ENCODE measurements at regions of chr12 and their contacts with region 1.

Region 1: DNA sequence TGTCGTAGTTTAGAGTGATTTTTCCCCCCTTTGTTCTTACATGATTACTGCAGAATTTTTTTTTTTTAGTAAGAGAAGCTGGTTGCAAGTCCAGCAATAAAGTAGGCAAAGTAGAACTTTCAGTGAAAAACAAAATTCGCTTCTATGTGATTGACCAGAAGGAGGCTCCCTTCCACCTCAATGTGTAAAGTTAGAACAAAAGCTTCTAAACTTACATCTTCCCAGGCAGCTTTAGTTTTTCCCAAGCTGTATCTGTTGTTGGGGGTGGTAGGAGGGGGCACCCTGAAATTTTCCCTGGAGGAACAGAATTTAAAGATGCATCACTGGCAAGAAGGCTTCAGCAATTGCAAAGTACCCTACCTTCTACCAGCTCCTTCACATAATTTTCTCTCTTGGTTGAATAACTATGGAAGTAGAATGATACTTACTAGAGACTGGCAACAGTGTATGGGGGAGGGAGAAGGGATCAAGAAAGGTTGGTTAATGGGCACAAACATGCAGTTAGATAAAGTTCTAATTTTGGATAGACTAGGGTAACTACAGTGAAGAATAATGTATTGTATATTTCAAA is 87.3 kb upstream of the E2F7 start:
- DNase-seq: no peak
- H3K4me3 ChIP-seq: no peak overlapping the region
- H3K27ac ChIP-seq: no peak overlapping the region
- H3K4me1 ChIP-seq: no peaks in the 10 kb centered on the region
- H3K27me3 ChIP-seq: no peaks in the 10 kb centered on the region
- CTCF ChIP-seq: peak in 2 of 3 experiments; percentile 24 to 32

Region 2: DNA sequence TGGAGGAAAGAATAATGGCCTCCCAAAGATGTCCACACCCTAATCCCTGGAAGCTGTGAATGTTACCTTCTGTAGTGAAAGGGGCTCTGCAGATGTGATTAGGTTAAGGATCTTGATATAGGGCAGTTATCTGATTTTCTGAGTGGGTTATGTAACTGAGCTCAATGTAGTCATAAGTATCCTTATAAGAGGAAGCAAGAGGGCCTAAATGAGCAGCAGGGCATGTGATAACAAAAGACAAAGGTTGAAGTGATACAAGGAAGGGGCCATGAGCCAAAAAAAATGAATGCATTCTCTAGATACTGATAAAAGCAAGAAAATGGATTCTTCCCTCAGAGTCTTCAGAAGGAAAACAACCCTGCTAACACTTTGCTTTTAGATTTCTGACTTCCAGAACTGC is 671.9 kb before region 1 on chr12:
- intact Hi-C with region 1: no loop called
- DNase-seq: no peak
- H3K4me3 ChIP-seq: no peak overlapping the region
- H3K27ac ChIP-seq: no peak overlapping the region
- H3K4me1 ChIP-seq: no peaks in the 10 kb centered on the region
- H3K27me3 ChIP-seq: no peaks in the 10 kb centered on the region
- CTCF ChIP-seq: no peak

Region 3: DNA sequence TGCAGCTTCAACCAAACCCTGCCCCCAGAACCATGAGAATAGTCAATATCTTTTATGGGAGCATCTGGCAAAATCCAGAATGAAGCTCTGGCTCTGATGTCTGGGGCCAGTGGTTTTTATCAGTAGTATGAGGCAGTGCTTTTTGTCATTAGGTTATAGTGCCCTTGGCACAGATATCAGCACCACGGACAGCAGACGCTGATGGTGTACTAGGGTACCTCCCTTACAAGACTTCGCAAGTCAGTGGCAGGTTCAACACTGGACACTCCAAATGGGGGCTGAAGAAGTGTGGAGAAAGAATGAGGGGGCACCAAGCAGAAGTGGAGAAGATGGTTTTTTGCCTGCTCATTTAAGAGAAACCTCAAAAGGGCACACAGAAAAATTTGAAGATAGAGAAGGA is 19.1 kb before region 1 on chr12:
- intact Hi-C with region 1: no loop called
- DNase-seq: no peak
- H3K4me3 ChIP-seq: no peak overlapping the region
- H3K27ac ChIP-seq: no peak overlapping the region
- H3K4me1 ChIP-seq: no peaks in the 10 kb centered on the region
- H3K27me3 ChIP-seq: no peaks in the 10 kb centered on the region
- CTCF ChIP-seq: no peak

Region 4: GRCh38 chr12:77247542-77247941 is 94.8 kb after region 1 on chr12:
- intact Hi-C with region 1: no loop called
- DNase-seq: no peak
- H3K4me3 ChIP-seq: no peak overlapping the region
- H3K27ac ChIP-seq: no peak overlapping the region
- H3K4me1 ChIP-seq: no peaks in the 10 kb centered on the region
- H3K27me3 ChIP-seq: no peaks in the 10 kb centered on the region
- CTCF ChIP-seq: no peak

Region 5: DNA sequence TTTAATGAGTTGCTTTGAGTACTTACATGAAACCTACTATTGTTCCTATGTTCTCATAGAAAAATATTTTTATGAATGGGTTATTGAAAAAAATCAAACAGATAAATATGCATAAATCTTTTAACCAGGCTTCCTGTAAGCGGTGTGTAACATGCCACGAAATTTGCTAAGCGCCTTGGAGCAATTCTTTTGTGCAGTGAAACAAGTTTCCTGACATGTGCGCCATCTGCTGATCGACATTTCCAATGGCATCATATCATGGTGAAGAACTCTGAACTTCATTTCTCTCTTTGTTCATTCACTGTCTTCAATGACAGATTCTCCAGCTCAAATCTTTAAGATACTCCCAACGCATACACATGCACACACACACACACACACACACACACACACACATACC is 532.4 kb after region 1 on chr12:
- intact Hi-C with region 1: loop called (anchors 10 kb)
- DNase-seq: peak in 1 of 2 donors; percentile 64
- H3K4me3 ChIP-seq: peak overlapping the region in 1 of 2 donors; percentile 2
- H3K27ac ChIP-seq: no peak overlapping the region
- H3K4me1 ChIP-seq: no peaks in the 10 kb centered on the region
- H3K27me3 ChIP-seq: no peaks in the 10 kb centered on the region
- CTCF ChIP-seq: peak in 1 of 3 experiments; percentile 37